Mammary epithelial cell (primary cell): ENCODE measurements at regions of chr22 and their contacts with region 1.

Region 1: DNA sequence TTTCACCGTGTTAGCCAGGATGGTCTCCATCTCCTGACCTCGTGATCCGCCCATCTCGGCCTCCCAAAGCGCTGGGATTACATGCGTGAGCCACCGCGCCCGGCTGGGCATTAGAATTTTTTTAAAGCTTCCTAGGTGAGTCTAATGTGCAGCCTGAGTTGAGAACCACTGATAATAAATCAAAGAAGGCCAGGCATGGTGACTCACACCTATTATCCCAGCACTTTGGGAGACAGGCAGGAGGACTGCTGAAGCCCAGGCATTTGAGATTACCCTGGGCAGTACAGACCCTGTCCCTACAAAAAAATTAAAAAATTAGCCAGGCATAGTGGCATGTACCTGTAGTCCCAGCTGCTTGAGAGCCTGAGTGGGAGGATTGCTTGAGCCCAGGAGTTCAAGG is 13.7 kb downstream of the MEI1 start:
- DNase-seq: no peak
- H3K4me3 ChIP-seq: no peak overlapping the region
- H3K27ac ChIP-seq: no peak overlapping the region
- H3K4me1 ChIP-seq: no peaks in the 10 kb centered on the region
- H3K27me3 ChIP-seq: no peaks in the 10 kb centered on the region
- CTCF ChIP-seq: no peak

Region 2: DNA sequence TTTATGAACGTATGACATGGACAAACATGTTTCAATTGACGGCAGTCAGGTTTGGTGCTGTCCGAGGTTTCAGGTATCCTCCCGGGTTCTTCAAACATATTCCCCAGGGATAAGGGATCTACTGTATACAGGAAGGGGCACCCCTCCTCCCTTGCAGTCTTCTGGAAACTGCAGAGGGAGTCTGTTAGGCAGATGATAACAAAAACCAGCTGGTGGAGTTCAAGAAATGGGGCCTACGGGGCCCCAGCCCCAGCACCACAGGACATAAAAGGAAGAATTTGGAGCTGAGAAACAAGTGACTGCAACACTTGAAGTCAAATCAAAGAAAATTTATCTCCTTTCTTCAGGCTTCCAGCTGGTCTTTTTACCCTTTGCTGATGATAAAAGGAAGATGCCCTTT is 56.4 kb before region 1 on chr22:
- CTCF ChIA-PET with region 1: no interaction called
- dilution Hi-C with region 1: no loop called
- in situ Hi-C with region 1: no loop called
- intact Hi-C with region 1: no loop called
- DNase-seq: no peak
- H3K4me3 ChIP-seq: no peak overlapping the region
- H3K27ac ChIP-seq: no peak overlapping the region
- H3K4me1 ChIP-seq: no peaks in the 10 kb centered on the region
- H3K27me3 ChIP-seq: no peaks in the 10 kb centered on the region
- CTCF ChIP-seq: no peak

Region 3: DNA sequence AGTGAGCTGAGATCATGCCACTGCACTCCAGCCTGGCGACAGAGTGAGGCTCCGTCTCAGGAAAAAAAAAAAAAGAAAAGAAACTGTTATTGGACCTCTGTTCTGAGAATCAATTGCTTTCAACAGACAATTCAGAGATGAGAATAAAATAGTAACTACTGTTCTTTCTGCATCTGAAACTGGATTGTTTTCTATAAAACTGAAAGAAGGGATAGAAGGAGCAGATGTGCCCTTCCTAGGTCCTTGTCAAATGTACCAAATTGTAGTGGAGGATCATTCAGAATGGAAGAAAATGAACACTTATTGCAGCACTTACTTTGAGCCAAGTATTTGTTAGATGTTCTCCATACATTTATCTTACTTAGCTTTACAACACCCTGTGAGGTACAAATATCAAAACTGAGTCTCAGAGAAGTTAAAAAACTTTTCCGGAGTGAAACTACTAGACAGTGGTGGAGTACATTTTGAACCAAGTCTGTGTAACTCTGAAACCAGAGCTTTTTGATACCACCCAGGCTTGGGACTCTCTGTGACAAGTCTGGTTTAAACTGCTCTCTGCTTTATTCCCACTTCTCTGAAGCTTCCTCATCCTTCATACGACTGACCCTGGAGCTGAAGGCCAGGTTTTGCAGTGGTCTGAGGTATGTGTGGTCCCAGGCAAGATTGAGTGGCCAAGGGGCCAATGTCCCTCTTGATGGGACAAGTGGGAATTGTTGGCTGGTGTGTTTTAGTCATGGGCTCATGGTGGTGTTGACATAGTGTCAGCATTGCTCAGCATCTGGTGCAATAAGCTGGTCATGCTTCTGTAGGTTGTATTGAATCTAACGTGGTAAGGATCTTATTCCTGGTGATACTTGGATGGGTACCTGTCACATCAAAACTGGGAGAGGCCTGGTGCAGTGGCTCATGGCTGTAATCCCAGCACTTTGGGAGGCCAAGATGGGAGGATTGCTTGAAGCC is 39.3 kb after region 1 on chr22:
- CTCF ChIA-PET with region 1: no interaction called
- dilution Hi-C with region 1: loop called (anchors 5 kb)
- in situ Hi-C with region 1: no loop called
- intact Hi-C with region 1: no loop called
- DNase-seq: no peak
- H3K4me3 ChIP-seq: no peak overlapping the region
- H3K27ac ChIP-seq: no peak overlapping the region
- H3K4me1 ChIP-seq: no peaks in the 10 kb centered on the region
- H3K27me3 ChIP-seq: no peaks in the 10 kb centered on the region
- CTCF ChIP-seq: no peak

Region 4: DNA sequence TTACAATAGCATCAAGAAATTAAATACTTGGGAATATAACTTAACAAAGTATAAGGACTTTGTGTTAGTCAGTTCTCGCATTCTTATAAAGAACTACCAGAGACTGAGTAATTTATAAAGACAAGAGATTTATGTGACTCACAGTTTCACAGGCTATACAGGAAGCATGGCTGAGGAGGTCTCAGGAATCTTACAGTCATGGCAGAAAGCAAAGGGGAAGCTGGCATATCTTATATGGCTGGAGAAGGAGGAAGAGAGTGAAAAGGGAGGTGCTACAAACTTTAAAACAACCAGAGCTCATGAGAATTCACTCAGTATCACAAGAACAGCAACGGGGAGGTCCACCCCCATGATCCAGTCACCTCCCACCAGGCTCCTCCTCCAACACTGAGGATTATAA is 55.4 kb after region 1 on chr22:
- CTCF ChIA-PET with region 1: no interaction called
- dilution Hi-C with region 1: no loop called
- in situ Hi-C with region 1: no loop called
- intact Hi-C with region 1: no loop called
- DNase-seq: peak; percentile 58
- H3K4me3 ChIP-seq: no peak overlapping the region
- H3K27ac ChIP-seq: peak overlapping the region; percentile 18
- H3K4me1 ChIP-seq: peaks cover 27% of the 10 kb centered on the region
- H3K27me3 ChIP-seq: no peaks in the 10 kb centered on the region
- CTCF ChIP-seq: no peak